ENCODE measurements at regions of chr6 and their contacts with region 1.

Region 1: DNA sequence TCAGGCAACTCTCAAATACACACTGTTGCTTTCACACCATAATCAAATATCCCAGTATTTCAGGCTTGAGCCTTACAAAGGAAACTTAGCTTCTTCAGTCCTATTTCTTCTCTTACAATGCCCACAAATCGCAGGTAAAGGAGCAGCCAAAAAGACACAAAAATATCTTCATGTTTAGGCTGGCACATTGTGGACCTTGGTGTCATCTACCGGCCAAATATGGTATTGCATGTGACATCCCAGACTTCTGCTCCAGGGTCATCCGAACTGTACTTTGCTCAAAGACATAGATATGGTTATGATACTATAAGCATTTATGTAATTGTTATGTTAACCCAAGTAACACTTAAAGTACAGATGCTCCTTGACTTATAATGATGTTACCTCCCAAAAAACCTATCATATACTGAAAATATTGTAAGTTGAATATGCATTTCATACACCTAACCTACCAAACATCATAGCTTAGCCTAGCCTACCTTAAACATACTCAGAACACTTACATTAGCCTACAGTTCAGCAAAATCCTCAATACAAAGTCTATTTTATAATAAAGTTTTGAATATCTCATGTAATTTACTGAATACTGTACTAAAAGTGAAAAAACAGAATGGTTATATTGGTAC is 4.6 kb downstream of the OR2H2 start:
- DNase-seq: no peak
- ATAC-seq: no peak

Region 2: DNA sequence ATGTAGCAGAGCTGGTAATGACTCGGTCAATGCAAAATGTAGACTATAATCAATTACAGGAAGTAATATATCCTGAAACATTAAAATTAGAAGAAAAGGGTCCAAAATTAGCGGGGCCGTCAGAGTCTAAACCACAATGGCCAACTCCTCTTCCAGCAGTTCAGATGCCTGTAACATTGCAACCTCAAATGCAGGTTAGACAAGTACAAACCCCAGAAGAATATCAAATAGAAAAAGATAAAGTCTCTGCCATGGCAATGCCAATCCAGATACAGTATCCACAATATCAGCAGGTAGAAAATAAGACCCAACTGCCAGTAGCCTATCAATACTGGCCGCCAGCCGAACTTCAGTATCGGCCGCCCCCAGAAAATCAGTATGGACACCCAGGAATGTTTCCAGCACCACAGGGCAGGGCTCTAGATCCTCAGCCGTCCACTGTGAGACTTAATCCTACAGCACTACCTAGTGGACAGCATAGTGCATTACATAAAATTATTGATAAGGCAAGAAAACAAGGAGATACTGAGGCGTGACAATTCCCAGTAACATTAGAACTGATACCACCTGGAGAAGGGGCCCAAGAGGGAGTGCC is 905.5 kb before region 1 on chr6:
- intact Hi-C with region 1: loop called (anchors 5 kb)
- DNase-seq: no peak
- ATAC-seq: no peak

Region 3: DNA sequence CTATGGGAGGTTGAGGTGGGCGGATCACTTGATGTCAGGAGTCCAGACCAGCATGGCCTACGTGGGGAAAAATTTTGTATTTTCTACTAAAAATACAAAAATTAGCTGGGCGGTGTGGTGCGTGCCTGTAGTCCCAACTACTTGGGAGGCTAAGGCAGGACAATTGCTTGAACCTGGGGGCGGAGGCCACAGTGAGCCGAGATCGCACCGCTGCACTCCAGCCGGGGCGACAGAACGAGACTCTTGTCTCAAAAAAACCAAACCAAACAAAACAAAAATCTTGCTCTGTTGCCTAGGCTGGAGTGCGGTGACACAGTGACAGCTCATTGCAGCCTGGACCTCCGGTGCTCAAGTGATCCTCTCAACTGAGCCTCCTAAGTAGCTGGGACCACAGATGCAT is 560.7 kb before region 1 on chr6:
- intact Hi-C with region 1: loop called (anchors 10 kb)
- DNase-seq: no peak
- ATAC-seq: no peak

Region 4: GRCh38 chr6:29295181-29295585 is 294.4 kb before region 1 on chr6:
- intact Hi-C with region 1: no loop called
- DNase-seq: no peak
- ATAC-seq: no peak

Region 5: DNA sequence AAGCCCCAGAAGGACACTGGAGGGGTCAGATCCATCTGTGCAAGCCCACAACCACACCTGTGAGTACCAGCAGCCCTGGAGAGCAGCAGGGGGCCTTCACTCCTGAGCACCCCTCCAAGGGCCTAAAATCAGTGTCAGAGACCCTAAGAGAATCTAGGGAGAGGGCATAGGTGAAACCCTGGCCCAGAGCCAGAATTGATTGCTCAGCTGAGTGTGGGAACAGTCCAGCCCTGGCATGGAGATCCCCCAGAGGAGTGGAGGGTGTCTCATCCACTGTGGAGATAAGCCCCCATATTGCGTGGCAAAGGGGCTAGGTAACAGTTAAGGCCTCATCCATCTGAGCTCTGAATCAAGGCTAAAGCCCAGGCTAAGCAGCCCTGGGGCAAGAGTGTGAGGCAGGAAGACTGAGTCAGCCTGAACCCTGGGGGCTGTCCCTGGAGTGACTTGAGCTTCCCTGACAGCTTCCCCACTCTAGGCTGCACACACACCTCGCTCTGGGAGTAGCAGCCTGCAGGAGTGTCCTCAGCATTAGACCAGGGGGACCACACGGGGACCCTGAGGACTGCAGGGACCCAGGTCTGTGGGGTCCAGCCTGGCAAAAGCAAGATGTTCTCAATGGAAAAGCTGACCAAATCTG is 58.0 kb before region 1 on chr6:
- intact Hi-C with region 1: no loop called
- DNase-seq: no peak
- ATAC-seq: no peak

Measured in Right ventricle myocardium inferior (tissue), 1 donor.